T-cell (primary cell): ENCODE measurements at regions of chr22 and their contacts with region 1.

Region 1: GRCh38 chr22:41062146-41062545 is 30.2 kb upstream of the EP300 start:
- DNase-seq: no peak
- ATAC-seq: no peak
- H3K4me3 ChIP-seq: no peak overlapping the region
- H3K4me3 Mint-ChIP-seq: no peak overlapping the region
- H3K27ac ChIP-seq: no peak overlapping the region
- H3K27ac Mint-ChIP-seq: no peak overlapping the region
- H3K4me1 ChIP-seq: no peaks in the 10 kb centered on the region
- H3K4me1 Mint-ChIP-seq: no peaks in the 10 kb centered on the region
- H3K27me3 ChIP-seq: no peaks in the 10 kb centered on the region
- H3K27me3 Mint-ChIP-seq: no peaks in the 10 kb centered on the region

Region 2: DNA sequence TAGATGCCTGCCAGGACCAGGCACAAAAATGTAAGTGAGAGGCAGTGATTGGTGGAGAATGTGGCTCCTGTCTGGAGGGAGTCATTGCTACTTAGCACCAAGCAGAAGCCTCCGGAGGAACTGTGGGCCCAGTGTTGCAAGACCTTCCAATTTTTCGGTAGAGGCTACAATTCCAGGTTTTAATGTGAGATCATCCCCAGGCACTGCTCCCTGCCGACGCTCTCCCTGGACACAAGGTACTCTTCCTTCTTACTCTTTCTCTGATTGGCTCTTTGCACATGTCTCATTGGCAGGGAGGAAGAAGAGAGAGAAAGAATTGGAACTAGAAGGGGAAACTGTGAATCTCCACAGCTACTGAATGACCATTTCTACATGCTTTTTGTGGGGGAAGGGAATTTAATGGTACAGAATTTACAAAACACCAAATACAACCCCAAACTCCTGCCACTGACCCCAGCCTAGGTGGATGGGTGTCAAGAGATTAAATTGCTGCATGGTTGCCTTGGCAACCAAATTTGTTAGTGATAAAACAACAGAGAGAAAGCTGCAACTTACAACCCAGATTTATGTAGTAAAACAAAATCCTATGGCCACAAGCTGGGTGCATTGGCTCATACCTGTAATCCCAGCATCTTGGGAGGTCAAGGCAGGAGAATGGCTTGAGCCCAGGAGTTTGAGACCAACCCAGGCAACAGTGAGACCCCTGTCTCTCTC is 23.3 kb before region 1 on chr22:
- CTCF ChIA-PET with region 1: no interaction called
- POLR2A ChIA-PET with region 1: no interaction called
- DNase-seq: no peak
- ATAC-seq: no peak
- H3K4me3 ChIP-seq: no peak overlapping the region
- H3K4me3 Mint-ChIP-seq: no peak overlapping the region
- H3K27ac ChIP-seq: no peak overlapping the region
- H3K27ac Mint-ChIP-seq: no peak overlapping the region
- H3K4me1 ChIP-seq: no peaks in the 10 kb centered on the region
- H3K4me1 Mint-ChIP-seq: no peaks in the 10 kb centered on the region
- H3K27me3 ChIP-seq: no peaks in the 10 kb centered on the region
- H3K27me3 Mint-ChIP-seq: peaks cover 0 to 3% of the 10 kb centered on the region in 2 donors

Region 3: GRCh38 chr22:41117127-41117965 is 55.2 kb after region 1 on chr22:
- CTCF ChIA-PET with region 1: no interaction called
- POLR2A ChIA-PET with region 1: interaction called in 1 of 2 experiments, 15 read pairs
- DNase-seq: no peak
- ATAC-seq: no peak
- H3K4me3 ChIP-seq: no peak overlapping the region
- H3K4me3 Mint-ChIP-seq: no peak overlapping the region
- H3K27ac ChIP-seq: no peak overlapping the region
- H3K27ac Mint-ChIP-seq: peak overlapping the region in 1 of 2 donors; percentile 25
- H3K4me1 ChIP-seq: peaks cover 0 to 18% of the 10 kb centered on the region in 2 experiments
- H3K4me1 Mint-ChIP-seq: peaks cover 62 to 64% (median 63%) of the 10 kb centered on the region in 3 donors
- H3K27me3 ChIP-seq: no peaks in the 10 kb centered on the region
- H3K27me3 Mint-ChIP-seq: no peaks in the 10 kb centered on the region